Activated naive CD4-positive, alpha-beta T cell treated with anti-CD3 and anti-CD28 coated beads for 36 hours (primary cell): ENCODE measurements at regions of chr14 and their contacts with region 1.

Region 1: GRCh38 chr14:104752735-104753531 is at the start of gene SIVA1:
- DNase-seq: peak; percentile 100
- H3K4me3 Mint-ChIP-seq: peak within 1 kb of the TSS; percentile 91
- H3K27ac Mint-ChIP-seq: peak within 1 kb of the TSS; percentile 88
- H3K4me1 Mint-ChIP-seq: peaks cover 32% of the 10 kb centered on the region
- H3K27me3 Mint-ChIP-seq: no peaks in the 10 kb centered on the region
- total RNA-seq, gene SIVA1: 86.1 to 92.7 TPM

Region 2: DNA sequence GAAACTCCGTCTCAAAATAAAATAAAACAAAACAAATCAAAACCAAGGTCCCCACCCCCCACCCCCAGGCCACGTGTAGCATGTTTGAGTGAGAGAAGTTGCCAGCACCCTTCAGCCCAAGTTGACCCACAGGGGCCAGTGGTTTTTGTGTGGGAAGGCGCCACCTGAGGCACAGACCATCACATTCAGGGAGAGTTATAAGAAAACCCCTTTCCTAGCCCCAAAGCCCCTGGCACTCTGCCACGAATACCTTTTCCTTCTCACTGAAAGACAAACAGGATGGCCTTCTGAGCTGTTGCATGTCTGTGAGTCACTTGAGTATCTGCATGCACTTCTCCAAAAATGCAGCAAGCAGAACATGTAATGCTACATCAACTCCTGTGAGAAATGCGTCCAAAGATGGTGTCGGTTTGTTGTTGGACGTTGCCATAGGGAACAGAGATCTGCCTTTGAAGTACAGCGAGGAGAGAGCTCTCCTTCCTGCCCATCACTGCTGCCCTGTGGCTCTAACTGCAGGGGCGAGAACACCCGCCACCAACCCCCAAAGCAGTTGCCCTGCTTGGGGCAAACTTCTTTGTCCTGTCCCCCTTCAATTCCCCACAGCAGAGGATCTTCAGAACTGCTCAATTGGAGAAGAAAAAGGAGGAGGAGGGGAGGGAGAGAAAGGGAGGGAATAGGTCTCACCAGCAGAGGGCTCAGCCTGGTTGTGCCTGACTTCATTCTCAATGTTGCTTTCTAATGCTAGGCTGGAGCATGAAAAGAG is 1978.4 kb before region 1 on chr14:
- CTCF ChIA-PET with region 1: no interaction called
- intact Hi-C with region 1: loop called (anchors 5 kb)
- DNase-seq: peak; percentile 81
- H3K4me3 Mint-ChIP-seq: peak overlapping the region; percentile 41
- H3K27ac Mint-ChIP-seq: peak overlapping the region; percentile 86
- H3K4me1 Mint-ChIP-seq: peaks cover 31% of the 10 kb centered on the region
- H3K27me3 Mint-ChIP-seq: no peaks in the 10 kb centered on the region

Region 3: DNA sequence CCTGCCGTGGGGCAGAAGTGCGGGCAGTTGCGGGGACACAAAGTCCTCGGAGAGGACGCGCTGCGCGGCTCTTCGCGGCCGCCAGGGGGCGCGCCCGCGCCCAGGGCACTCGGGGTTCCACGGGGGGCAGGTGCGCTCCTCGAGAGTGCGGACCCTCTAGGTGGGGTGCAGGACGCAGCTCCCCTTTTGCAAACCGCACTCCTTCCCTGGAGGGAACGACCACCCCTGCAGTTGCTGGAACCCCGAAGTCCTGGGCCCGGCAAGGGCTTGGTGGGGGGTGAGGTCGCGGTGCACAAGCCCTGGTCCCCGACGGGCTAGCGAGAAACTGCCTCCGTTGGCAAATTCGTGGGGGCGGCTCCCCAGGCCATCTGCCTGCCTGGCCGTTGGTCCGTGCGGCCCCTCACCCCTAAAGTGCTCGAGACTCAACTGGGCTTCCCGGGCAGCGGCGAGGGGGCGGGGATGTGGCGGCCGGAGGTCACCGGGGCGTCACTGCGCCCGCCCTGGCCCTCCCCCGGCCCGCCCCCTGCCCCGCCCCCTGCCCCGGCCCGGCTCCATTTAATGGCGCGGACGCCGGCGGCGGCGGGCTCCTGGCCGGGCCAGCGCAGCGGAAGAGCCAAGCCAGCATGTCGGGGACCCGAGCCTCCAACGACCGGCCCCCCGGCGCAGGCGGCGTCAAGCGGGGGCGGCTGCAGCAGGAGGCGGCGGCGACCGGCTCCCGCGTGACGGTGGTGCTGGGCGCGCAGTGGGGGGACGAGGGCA is 29.1 kb before region 1 on chr14 and contains the start of gene ADSS1:
- CTCF ChIA-PET with region 1: interaction called, 5 read pairs
- intact Hi-C with region 1: loop called (anchors 1 kb)
- DNase-seq: peak; percentile 53
- H3K4me3 Mint-ChIP-seq: peak within 1 kb of the TSS; percentile 71
- H3K27ac Mint-ChIP-seq: no peak within 1 kb of the TSS
- H3K4me1 Mint-ChIP-seq: no peaks in the 10 kb centered on the region
- H3K27me3 Mint-ChIP-seq: no peaks in the 10 kb centered on the region
- total RNA-seq, gene ADSS1: 5.1 to 5.5 TPM

Region 4: GRCh38 chr14:104735830-104736642 is 16.9 kb before region 1 on chr14:
- CTCF ChIA-PET with region 1: no interaction called
- intact Hi-C with region 1: no loop called
- DNase-seq: no peak
- H3K4me3 Mint-ChIP-seq: no peak overlapping the region
- H3K27ac Mint-ChIP-seq: no peak overlapping the region
- H3K4me1 Mint-ChIP-seq: no peaks in the 10 kb centered on the region
- H3K27me3 Mint-ChIP-seq: no peaks in the 10 kb centered on the region

Region 5: DNA sequence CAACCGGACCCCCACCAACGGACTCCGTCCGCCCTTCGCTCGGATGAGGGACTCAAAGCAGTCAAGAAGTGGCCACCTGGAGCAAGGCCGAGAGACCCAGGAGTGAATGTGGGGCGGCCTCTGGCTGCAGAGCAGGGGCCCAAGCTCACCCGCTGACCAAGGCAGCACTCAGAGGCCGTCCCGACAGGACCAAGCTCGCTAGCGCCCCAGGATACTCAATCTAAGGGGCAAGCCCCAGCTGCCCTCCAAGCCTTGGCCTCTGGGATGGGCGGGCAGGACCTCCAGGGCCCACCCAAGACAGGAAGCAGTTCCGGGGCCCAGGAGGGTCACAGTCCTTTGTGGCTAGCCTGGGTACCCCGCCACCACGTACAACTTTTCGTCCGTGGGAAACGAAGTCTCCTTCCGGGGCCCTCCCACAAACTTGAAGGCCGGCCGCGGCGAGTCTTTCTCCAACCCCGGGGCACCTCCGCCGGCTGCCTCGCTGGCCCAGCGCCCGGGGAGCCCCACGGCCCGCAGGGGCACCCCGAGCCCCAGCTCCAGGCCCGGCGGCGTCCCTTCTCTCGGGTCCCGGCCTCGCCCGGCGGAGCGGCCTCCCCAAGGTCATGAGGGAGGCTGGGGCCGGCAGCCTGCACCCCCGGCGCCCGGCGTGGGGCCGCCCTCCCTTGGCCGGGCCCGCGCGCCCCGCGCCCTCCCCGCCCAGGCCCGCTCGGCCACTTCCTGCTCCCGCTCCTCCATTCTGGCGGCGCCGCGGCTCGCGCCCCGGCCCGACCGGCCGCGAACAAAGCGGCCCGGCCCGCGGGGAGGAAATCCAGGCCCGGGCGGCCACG is 41.9 kb after region 1 on chr14:
- CTCF ChIA-PET with region 1: no interaction called
- intact Hi-C with region 1: loop called (anchors 1 kb)
- DNase-seq: peak; percentile 23
- H3K4me3 Mint-ChIP-seq: peak overlapping the region; percentile 84
- H3K27ac Mint-ChIP-seq: no peak overlapping the region
- H3K4me1 Mint-ChIP-seq: peaks cover 38% of the 10 kb centered on the region
- H3K27me3 Mint-ChIP-seq: no peaks in the 10 kb centered on the region

Region 6: GRCh38 chr14:104826189-104826860 is 73.4 kb after region 1 on chr14:
- CTCF ChIA-PET with region 1: interaction called, 20 read pairs
- intact Hi-C with region 1: no loop called
- DNase-seq: peak; percentile 94
- H3K4me3 Mint-ChIP-seq: peak overlapping the region; percentile 70
- H3K27ac Mint-ChIP-seq: no peak overlapping the region
- H3K4me1 Mint-ChIP-seq: peaks cover 16% of the 10 kb centered on the region
- H3K27me3 Mint-ChIP-seq: peaks cover 6% of the 10 kb centered on the region

Region 7: GRCh38 chr14:104865644-104866441 is 112.9 kb after region 1 on chr14:
- CTCF ChIA-PET with region 1: no interaction called
- intact Hi-C with region 1: no loop called
- DNase-seq: peak; percentile 38
- H3K4me3 Mint-ChIP-seq: peak overlapping the region; percentile 65
- H3K27ac Mint-ChIP-seq: no peak overlapping the region
- H3K4me1 Mint-ChIP-seq: peaks cover 2% of the 10 kb centered on the region
- H3K27me3 Mint-ChIP-seq: peaks cover 25% of the 10 kb centered on the region

Region 8: DNA sequence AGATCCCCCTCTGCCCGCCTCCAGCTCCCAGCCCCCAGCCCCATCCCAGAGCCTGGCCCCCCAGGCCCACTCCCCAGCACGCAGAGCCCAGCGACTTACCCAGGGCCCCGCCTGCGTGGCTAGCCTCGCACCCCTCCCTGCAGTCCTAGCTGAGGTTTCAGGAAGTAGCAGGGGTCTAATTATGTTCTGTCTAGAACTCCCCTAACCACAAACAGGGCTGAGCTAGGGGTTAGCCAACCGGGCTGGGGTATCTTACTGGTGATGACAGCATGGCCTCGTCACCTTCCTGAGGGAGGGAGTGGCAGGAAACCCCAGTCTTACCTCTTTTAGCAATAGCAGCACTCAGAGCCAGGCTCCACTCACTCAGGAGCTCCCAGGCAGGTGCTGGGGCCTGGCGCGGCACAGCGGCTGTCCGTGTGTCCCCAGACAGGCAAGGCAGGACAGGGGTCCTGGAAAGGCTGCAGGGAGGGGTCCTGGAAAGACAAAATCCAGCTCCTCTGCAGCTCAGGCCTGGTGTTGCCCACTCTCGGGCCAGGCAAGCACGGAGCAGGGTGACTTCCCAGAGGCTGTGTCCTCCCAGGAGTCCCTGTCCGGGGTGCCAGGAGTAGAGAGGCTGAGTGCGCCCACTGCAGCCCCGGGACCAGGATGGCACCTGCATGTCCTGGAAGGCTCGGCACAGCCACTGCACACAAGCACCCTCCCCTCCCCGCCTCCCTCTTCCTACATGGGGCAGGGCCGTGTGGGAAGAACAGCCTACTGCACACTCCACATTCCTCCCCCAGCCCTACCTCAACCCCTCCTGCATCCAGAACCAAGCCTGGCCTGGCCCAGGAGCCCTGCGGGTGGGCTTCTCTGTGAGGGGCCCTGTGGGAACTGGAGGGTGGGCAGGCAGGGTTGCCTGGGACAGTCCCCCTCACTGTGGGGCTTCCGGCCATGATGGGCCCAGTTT is 312.6 kb after region 1 on chr14 and contains the start of gene GPR132:
- CTCF ChIA-PET with region 1: no interaction called
- intact Hi-C with region 1: loop called (anchors 10 kb)
- DNase-seq: peak; percentile 97
- H3K4me3 Mint-ChIP-seq: peak within 1 kb of the TSS; percentile 84
- H3K27ac Mint-ChIP-seq: peak within 1 kb of the TSS; percentile 96
- H3K4me1 Mint-ChIP-seq: peaks cover 81% of the 10 kb centered on the region
- H3K27me3 Mint-ChIP-seq: no peaks in the 10 kb centered on the region
- total RNA-seq, gene GPR132: 11.3 to 15.3 TPM